ENCODE measurements at regions of chr5 and their contacts with region 1.

Region 1: DNA sequence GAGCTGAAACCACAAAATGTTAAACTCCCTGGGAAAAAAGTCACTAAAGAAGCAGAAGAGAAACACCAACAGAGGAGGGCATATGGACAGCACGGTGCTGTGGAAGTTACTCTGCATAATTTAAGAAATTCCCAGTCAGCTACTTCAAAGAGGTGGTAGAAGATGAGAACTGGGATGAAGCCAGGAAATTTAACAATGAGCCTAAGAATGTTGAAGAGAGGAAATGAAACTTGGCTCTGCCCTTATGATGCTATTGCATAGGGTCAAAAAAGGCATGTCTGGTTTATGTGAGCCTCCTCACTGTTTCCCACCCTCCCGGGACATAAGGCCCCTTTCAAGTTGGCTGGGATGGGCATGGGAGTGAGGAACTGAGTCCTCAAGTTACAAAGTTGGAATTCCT is 25.4 kb upstream of the SNX18 start:
- DNase-seq: no peak
- ATAC-seq: no peak
- H3K4me3 Mint-ChIP-seq: no peak overlapping the region
- H3K27ac Mint-ChIP-seq: no peak overlapping the region
- H3K4me1 Mint-ChIP-seq: no peaks in the 10 kb centered on the region
- H3K27me3 Mint-ChIP-seq: peaks cover 5% of the 10 kb centered on the region

Region 2: GRCh38 chr5:54243473-54244080 is 248.6 kb before region 1 on chr5:
- CTCF ChIA-PET with region 1: interaction called, 29 read pairs
- POLR2A ChIA-PET with region 1: no interaction called
- intact Hi-C with region 1: loop called (anchors 1 to 2 kb)
- DNase-seq: peak; percentile 53
- ATAC-seq: no peak
- H3K4me3 Mint-ChIP-seq: no peak overlapping the region
- H3K27ac Mint-ChIP-seq: no peak overlapping the region
- H3K4me1 Mint-ChIP-seq: peaks cover 4% of the 10 kb centered on the region
- H3K27me3 Mint-ChIP-seq: no peaks in the 10 kb centered on the region

Region 3: GRCh38 chr5:54443270-54443669 is 48.9 kb before region 1 on chr5:
- CTCF ChIA-PET with region 1: interaction called, 15 read pairs
- POLR2A ChIA-PET with region 1: no interaction called
- intact Hi-C with region 1: loop called in 1 of 2 experiments (anchors 2 kb)
- DNase-seq: no peak
- ATAC-seq: no peak
- H3K4me3 Mint-ChIP-seq: no peak overlapping the region
- H3K27ac Mint-ChIP-seq: no peak overlapping the region
- H3K4me1 Mint-ChIP-seq: peaks cover 17% of the 10 kb centered on the region
- H3K27me3 Mint-ChIP-seq: no peaks in the 10 kb centered on the region

Region 4: DNA sequence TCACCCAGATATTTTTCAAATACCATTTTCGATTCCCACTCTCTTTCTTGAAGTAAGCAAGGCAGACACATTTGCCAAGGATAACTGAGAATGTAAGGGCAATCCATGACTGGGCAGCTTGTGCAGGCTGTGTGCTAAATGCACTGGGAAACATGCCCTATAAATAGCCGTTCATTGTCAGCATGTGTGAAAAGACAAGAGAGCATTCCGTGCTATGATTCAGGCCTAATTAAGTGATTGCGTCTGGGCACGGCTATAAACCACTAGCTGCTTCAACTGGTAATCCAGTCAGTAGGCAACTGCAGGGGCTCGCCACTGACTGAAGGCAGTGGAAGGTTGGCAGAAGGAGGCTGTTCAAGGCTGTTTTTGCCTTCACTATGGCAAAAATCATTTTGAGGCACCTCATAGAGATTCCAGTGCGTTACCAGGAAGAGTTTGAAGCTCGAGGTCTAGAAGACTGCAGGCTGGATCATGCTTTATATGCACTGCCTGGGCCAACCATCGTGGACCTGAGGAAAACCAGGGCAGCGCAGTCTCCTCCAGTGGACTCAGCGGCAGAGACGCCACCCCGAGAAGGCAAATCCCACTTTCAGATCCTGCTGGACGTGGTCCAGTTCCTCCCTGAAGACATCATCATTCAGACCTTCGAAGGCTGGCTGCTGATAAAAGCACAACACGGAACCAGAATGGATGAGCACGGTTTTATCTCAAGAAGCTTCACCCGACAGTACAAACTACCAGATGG is 36.6 kb before region 1 on chr5 and contains the start of gene HSPB3:
- CTCF ChIA-PET with region 1: interaction called, 10 read pairs
- POLR2A ChIA-PET with region 1: no interaction called
- intact Hi-C with region 1: no loop called
- DNase-seq: no peak
- ATAC-seq: no peak
- H3K4me3 Mint-ChIP-seq: no peak within 1 kb of the TSS
- H3K27ac Mint-ChIP-seq: no peak within 1 kb of the TSS
- H3K4me1 Mint-ChIP-seq: no peaks in the 10 kb centered on the region
- H3K27me3 Mint-ChIP-seq: peaks cover 6% of the 10 kb centered on the region
- total RNA-seq, gene HSPB3: not detected

Region 5: DNA sequence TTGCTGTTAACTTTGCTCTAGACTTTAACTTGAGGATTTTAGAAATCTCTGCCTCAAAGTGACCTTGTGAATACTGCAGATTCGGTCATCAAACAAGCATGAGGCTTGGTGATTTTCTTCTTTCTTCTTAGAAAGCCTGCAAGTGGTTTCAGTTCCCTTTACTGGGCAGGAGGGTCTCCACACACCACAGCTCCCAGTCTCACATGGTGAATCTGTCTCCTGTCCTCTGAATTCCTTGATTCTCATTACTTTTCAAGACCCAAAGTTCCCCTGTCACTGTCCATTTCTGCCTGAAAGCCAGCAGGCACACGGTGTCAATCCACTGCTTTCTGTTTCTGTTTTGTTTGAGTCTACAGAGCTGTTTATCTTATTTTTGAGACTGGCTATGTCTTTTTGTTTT is 22.6 kb before region 1 on chr5:
- CTCF ChIA-PET with region 1: interaction called, 22 read pairs
- POLR2A ChIA-PET with region 1: no interaction called
- intact Hi-C with region 1: no loop called
- DNase-seq: no peak
- ATAC-seq: no peak
- H3K4me3 Mint-ChIP-seq: no peak overlapping the region
- H3K27ac Mint-ChIP-seq: no peak overlapping the region
- H3K4me1 Mint-ChIP-seq: peaks cover 4% of the 10 kb centered on the region
- H3K27me3 Mint-ChIP-seq: peaks cover 4% of the 10 kb centered on the region

Region 6: DNA sequence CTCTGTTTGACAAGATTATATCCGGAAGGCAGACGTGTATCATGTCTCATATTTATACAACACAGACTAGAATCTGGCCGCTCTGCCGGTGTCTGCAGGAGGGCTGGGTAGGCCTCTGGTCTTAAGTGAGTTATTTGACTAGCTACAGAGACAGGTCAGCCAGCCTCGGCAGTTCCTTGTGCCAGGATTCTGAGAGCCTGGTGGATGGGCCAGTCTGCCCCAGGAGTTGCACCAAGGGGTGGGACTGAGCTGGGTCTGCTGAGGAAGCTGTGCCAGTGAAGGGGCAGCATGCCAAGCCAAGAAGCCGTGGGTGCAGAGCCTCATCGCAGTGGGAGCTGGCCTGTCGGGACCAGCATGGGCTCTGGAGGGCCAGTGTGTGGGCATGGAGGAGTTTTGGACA is 32.5 kb after region 1 on chr5:
- CTCF ChIA-PET with region 1: no interaction called
- POLR2A ChIA-PET with region 1: no interaction called
- intact Hi-C with region 1: no loop called
- DNase-seq: no peak
- ATAC-seq: no peak
- H3K4me3 Mint-ChIP-seq: no peak overlapping the region
- H3K27ac Mint-ChIP-seq: no peak overlapping the region
- H3K4me1 Mint-ChIP-seq: peaks cover 44% of the 10 kb centered on the region
- H3K27me3 Mint-ChIP-seq: no peaks in the 10 kb centered on the region

Region 7: DNA sequence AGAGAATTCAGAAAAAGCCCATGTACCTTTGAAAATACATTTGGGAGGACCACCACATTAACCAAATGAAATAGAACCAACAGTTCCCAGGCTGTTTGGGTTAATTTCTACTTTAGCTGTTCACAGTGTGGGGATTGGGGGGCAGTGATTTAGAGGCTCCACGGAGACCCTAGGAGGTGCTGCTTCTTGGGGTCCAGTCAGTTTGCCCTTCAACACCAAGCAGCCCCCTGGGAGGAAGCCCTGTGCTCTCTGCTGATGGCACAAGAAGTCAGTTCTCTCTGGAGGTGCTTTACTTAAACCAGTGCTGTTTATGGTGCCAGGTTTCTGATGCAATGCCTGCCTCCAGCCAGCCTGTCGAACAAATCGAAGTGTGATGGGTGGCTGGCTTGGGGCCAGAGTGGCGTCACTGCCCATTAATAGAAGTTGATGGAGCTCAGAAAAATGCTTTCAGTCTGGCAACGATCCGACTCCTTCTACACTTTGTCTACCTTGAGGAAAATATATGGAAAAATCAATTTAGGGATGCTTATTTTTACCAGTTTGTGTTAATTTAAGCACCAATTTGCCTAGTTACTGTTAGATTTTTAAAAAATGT is 159.4 kb after region 1 on chr5:
- CTCF ChIA-PET with region 1: no interaction called
- POLR2A ChIA-PET with region 1: no interaction called
- intact Hi-C with region 1: no loop called
- DNase-seq: no peak
- ATAC-seq: no peak
- H3K4me3 Mint-ChIP-seq: no peak overlapping the region
- H3K27ac Mint-ChIP-seq: no peak overlapping the region
- H3K4me1 Mint-ChIP-seq: peaks cover 13% of the 10 kb centered on the region
- H3K27me3 Mint-ChIP-seq: no peaks in the 10 kb centered on the region

Region 8: DNA sequence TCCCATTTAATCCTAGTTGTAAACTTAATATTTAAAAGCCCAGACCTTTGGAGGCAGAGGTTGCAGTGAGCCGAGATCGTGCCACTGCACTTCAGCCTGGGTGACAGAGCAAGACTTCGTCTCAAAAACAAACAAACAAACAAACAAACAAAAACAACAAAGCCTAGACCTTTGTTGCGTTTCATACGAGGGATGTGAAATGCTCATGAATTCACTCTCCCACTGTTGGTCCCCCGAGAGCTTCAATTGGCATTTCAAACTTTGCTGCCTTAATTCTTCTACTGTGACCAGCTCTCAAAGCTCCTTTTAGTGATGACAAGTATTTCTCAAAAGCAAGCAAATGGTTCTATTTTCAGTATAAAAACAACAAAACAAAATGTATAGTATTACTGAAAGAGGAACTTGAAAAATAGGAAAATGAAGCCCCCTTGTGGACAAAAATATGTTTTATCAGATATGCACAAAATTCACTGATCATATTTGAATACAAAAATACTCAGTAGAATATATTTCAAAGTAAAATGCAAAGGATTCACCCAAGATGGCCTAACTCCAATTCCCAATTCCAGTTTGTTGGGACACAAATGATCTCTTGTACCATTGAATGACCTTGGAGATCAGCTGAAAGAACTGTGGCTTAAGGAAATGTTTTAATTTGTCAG is 352.9 kb after region 1 on chr5:
- CTCF ChIA-PET with region 1: interaction called, 10 read pairs
- POLR2A ChIA-PET with region 1: no interaction called
- intact Hi-C with region 1: no loop called
- DNase-seq: no peak
- ATAC-seq: no peak
- H3K4me3 Mint-ChIP-seq: no peak overlapping the region
- H3K27ac Mint-ChIP-seq: no peak overlapping the region
- H3K4me1 Mint-ChIP-seq: peaks cover 3% of the 10 kb centered on the region
- H3K27me3 Mint-ChIP-seq: peaks cover 5% of the 10 kb centered on the region